ENCODE measurements at regions of chr1 and their contacts with region 1.

Region 1: GRCh38 chr1:88983791-88984559 is 8.5 kb downstream of the KYAT3 start:
- DNase-seq: peak; percentile 49
- H3K4me3 Mint-ChIP-seq: peak overlapping the region; percentile 15
- H3K27ac Mint-ChIP-seq: peak overlapping the region; percentile 44
- H3K4me1 Mint-ChIP-seq: peaks cover 75% of the 10 kb centered on the region
- H3K27me3 Mint-ChIP-seq: no peaks in the 10 kb centered on the region

Region 2: DNA sequence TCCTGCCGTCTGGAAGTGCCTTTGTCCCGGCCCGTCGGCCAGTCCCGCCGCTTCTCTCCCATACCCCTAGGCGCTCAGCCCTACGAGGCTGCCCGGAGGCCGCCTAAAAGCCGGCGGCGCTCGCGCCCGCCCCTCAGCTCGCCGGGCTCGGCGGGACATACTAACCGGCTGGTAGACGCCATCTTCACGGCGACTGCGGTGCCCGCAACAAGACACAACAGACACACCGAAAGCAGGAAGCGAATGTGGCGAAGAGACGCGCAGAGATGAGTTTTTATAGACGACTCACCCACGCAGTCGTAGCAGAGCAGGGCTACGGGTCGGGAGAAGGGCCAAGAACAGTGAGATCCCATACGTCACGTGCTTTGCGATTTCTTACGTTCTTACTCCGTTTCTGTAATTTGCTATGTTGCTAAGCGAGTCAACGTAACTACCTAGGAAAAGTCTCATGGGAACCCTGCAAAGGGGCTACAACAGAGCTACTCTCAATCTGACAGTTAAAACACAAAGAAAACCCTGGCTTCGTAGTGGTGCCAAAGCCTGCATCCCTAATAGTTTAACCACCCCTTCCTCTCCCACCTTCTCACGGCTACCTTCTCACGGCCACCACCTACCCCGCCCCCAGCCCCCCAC is 92.5 kb before region 1 on chr1 and contains the start of gene GTF2B:
- CTCF ChIA-PET with region 1: no interaction called
- DNase-seq: peak; percentile 96
- H3K4me3 Mint-ChIP-seq: peak within 1 kb of the TSS; percentile 95
- H3K27ac Mint-ChIP-seq: peak within 1 kb of the TSS; percentile 98
- H3K4me1 Mint-ChIP-seq: peaks cover 41% of the 10 kb centered on the region
- H3K27me3 Mint-ChIP-seq: no peaks in the 10 kb centered on the region

Region 3: GRCh38 chr1:88922214-88922613 is 61.8 kb before region 1 on chr1:
- CTCF ChIA-PET with region 1: no interaction called
- DNase-seq: no peak
- H3K4me3 Mint-ChIP-seq: no peak overlapping the region
- H3K27ac Mint-ChIP-seq: no peak overlapping the region
- H3K4me1 Mint-ChIP-seq: peaks cover 1% of the 10 kb centered on the region
- H3K27me3 Mint-ChIP-seq: no peaks in the 10 kb centered on the region

Region 4: DNA sequence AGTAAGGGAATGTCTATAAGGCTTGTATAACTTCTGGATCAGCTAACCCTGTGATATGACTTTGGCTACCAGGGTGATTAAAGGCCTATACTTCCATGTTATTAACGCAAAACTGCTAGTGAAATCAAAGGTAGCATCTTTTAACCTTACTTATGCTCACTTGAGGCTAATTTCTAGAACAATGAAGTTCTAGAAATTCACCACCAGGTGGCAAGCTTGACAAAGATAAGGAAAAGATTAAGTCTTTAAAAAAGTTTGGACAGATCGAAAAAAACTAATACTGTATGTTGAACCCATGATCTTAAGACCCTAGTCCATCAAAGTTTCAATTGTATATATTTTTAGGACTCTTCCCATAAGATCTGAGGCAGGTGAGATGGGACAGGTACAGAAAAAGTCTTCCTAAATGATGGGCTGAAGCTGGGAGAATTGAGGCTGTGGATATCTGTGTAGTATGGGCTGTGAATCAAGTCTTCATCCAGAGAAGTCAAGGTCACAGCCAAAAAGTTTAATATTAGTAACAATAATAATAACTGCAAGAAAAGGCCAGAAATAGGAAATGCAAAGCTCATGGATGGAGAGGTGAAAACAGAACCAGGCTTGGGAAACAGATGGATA is 10.3 kb before region 1 on chr1:
- CTCF ChIA-PET with region 1: interaction called, 23 read pairs
- DNase-seq: no peak
- H3K4me3 Mint-ChIP-seq: no peak overlapping the region
- H3K27ac Mint-ChIP-seq: no peak overlapping the region
- H3K4me1 Mint-ChIP-seq: peaks cover 20% of the 10 kb centered on the region
- H3K27me3 Mint-ChIP-seq: no peaks in the 10 kb centered on the region